B cell (primary cell): ENCODE measurements at regions of chr1 and their contacts with region 1.

Region 1: DNA sequence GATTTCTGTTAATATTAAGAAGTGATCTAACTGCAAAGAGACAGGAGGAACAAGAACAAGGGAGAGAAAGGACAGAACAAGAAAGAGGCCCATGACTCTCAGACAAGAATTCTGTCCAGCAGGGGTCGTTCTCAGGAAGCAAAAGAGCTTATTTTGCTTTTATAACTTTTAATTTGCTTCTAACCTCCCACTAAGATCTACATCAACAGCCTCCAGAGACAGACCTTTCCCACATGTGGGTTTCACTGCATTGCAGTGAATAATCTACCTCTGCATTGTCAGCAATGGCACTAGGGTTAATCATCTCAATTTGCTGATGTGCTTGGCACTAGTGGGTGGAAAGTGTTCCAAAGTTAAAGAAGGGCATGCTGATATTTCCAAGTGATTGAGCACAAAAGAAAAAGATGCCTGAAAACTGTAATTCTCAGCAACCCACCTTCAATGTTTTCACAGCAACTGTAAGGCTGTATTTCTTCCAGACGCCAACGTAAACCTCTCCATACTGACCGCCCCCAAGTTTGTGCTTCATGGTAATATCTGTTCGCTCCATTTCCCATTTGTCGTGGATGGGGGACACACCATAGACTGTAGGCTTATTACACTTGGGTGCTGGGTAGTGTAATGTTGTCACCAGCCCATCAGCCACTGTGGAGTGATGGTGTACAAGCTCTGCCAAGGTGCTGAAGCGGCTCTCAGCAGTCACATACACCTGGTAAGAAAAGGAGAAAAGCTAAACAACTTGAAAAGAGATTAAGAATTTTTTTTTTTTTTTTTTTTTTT is 39.5 kb downstream of the TOR3A start:
- DNase-seq: peak; percentile 48
- ATAC-seq: no peak
- H3K4me3 ChIP-seq: no peak overlapping the region
- H3K4me3 Mint-ChIP-seq: no peak overlapping the region
- H3K27ac ChIP-seq: no peak overlapping the region
- H3K27ac Mint-ChIP-seq: peak overlapping the region; percentile 6
- H3K4me1 ChIP-seq: no peaks in the 10 kb centered on the region
- H3K4me1 Mint-ChIP-seq: peaks cover 5% of the 10 kb centered on the region
- H3K27me3 ChIP-seq: no peaks in the 10 kb centered on the region
- H3K27me3 Mint-ChIP-seq: no peaks in the 10 kb centered on the region
- CTCF ChIP-seq: peak; percentile 55

Region 2: DNA sequence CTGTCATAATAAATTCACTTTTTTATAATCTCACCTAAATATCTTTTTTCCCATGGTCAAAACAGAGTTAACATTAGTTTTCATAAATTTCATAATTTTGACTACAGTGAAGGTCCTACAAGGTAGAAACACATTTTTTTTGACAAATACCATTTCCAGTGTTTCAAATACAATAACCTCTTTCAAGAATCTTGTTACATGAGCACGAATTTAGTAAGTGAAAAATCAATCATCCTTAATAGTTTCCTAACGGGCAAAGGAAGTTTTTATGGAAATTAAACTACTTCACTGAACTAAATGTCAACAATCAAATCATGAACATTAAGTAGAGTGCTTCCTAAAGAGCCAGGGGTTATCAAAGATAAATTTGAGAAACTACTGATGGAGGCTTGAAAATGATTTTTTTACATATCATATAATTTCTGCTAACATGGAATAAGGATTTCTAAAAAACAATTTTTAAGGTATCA is 72.8 kb after region 1 on chr1:
- CTCF ChIA-PET with region 1: interaction called, 13 read pairs
- POLR2A ChIA-PET with region 1: interaction called, 6 read pairs
- intact Hi-C with region 1: no loop called
- DNase-seq: no peak
- ATAC-seq: no peak
- H3K4me3 ChIP-seq: no peak overlapping the region
- H3K4me3 Mint-ChIP-seq: no peak overlapping the region
- H3K27ac ChIP-seq: no peak overlapping the region
- H3K27ac Mint-ChIP-seq: no peak overlapping the region
- H3K4me1 ChIP-seq: peaks cover 4 to 5% of the 10 kb centered on the region in 2 donors
- H3K4me1 Mint-ChIP-seq: peaks cover 12% of the 10 kb centered on the region
- H3K27me3 ChIP-seq: no peaks in the 10 kb centered on the region
- H3K27me3 Mint-ChIP-seq: no peaks in the 10 kb centered on the region
- CTCF ChIP-seq: no peak

Region 3: DNA sequence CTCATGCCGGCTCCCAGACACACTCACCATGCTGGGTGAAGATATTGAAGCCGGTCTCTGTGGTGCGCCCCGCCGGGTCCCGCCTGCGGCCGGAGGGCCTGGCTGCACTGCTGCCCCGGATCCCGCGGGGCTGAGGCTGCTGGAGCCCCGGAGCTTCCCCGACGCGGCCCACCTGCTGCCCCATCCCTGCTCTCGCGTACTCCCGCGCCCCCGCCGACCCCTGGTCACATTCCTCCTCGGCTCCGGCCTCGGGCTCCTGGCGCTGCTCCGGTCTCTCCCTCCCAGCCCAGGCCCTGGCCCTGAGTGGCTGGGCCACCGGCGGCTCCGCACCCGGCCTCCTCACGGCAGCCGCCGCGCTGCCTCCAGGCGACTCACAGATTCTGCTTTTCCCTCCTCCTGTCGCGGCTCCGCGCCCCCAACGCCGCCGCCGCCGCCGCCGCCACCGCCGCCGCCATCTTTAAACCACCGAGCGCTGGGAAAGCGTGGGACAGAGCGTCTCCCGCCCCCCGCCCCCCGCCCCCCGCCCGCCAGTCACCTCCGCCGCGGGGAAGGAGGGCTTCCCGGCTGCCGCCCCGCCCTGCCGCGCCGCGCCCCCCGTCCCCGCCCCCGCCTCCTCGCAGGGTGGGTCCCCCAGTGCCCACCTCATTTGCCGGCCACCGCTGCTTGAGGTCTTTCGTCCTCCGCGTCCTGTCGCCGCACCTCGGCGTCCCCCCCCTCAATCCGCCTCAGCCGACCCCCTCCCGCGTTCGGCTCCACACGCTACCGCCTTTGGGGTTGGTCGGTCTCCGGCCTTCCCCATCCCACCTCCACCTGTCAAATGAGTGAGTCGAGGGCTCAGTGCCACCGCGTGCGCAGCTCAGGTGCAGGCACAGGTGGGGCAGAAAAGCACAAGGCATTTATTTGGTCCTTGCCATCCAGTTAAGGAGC is 108.1 kb after region 1 on chr1 and contains the start of gene ABL2:
- CTCF ChIA-PET with region 1: no interaction called
- POLR2A ChIA-PET with region 1: interaction called, 5 read pairs
- intact Hi-C with region 1: loop called (anchors 10 kb)
- DNase-seq: peak; percentile 73
- ATAC-seq: peak; percentile 72
- H3K4me3 ChIP-seq: peak within 1 kb of the TSS; percentile 62 to 87 (median 85)
- H3K4me3 Mint-ChIP-seq: peak within 1 kb of the TSS; percentile 93
- H3K27ac ChIP-seq: peak within 1 kb of the TSS in 1 of 2 donors; percentile 74
- H3K27ac Mint-ChIP-seq: peak within 1 kb of the TSS; percentile 89
- H3K4me1 ChIP-seq: peaks cover 7 to 13% of the 10 kb centered on the region in 2 donors
- H3K4me1 Mint-ChIP-seq: peaks cover 29% of the 10 kb centered on the region
- H3K27me3 ChIP-seq: no peaks in the 10 kb centered on the region
- H3K27me3 Mint-ChIP-seq: no peaks in the 10 kb centered on the region
- CTCF ChIP-seq: no peak
- total RNA-seq, gene ABL2: 20.0 and 20.7 TPM in 2 replicates

Region 4: GRCh38 chr1:180198196-180198595 is 1076.8 kb after region 1 on chr1:
- CTCF ChIA-PET with region 1: no interaction called
- POLR2A ChIA-PET with region 1: no interaction called
- intact Hi-C with region 1: no loop called
- DNase-seq: no peak
- ATAC-seq: no peak
- H3K4me3 ChIP-seq: no peak overlapping the region
- H3K4me3 Mint-ChIP-seq: no peak overlapping the region
- H3K27ac ChIP-seq: no peak overlapping the region
- H3K27ac Mint-ChIP-seq: no peak overlapping the region
- H3K4me1 ChIP-seq: no peaks in the 10 kb centered on the region
- H3K4me1 Mint-ChIP-seq: no peaks in the 10 kb centered on the region
- H3K27me3 ChIP-seq: no peaks in the 10 kb centered on the region
- H3K27me3 Mint-ChIP-seq: no peaks in the 10 kb centered on the region
- CTCF ChIP-seq: no peak